Right lobe of liver (tissue), 6 donors: ENCODE measurements at regions of chr16 and their contacts with region 1.

Region 1: DNA sequence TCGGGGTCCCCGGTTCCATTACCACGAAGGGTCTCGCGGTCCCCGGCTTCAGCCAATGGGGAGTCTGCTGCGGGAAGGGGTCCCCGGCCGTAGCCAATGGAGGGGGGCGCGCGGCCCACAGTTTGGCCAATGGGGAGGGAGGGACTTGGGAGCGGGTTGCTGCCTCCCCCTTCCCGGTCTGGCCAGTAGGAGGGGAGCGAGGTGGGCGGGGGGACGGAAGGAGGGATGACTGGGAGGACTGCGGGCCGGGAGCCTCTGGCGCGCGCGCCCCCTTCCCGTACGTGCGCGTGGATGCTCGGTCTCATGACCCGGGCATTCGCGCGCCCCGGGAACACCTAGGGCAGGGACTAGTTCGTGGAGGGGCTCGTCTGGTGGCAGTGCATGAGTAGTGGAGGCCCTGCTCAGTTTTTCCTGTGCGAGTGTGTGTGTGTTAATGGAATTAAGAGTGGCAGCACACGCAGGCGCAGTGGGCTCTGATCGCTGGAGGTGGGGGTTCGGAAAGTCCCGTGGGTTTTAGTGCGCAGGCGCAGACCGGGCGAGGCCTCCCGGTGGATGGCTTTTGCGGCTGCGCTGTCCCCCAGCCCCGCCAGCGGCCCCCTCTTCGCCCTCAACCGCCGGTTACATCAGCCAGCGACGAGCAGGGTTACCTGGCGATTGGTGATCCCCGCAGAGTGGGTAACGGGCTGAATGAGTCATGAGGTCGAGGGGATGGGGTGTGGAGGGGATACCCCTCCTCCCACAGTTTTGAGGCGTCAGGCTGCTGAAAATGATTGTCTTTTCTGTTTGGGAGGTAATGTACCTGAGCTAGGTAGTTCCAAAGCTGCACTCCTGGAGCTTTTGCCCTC is 1.3 kb downstream of the ATXN2L start:
- DNase-seq: peak; percentile 98
- ATAC-seq: peak; percentile 87 to 95 (median 88)
- H3K4me3 ChIP-seq: peak overlapping the region; percentile 97 to 99 (median 99)
- H3K27ac ChIP-seq: peak overlapping the region; percentile 88 to 99 (median 94)
- H3K4me1 ChIP-seq: peaks cover 0 to 43% (median 12%) of the 10 kb centered on the region in 4 donors
- H3K27me3 ChIP-seq: no peaks in the 10 kb centered on the region
- CTCF ChIP-seq: peak in 3 of 4 donors; percentile 21 to 38 (median 32)
- POLR2A ChIP-seq: peak; percentile 81

Region 2: DNA sequence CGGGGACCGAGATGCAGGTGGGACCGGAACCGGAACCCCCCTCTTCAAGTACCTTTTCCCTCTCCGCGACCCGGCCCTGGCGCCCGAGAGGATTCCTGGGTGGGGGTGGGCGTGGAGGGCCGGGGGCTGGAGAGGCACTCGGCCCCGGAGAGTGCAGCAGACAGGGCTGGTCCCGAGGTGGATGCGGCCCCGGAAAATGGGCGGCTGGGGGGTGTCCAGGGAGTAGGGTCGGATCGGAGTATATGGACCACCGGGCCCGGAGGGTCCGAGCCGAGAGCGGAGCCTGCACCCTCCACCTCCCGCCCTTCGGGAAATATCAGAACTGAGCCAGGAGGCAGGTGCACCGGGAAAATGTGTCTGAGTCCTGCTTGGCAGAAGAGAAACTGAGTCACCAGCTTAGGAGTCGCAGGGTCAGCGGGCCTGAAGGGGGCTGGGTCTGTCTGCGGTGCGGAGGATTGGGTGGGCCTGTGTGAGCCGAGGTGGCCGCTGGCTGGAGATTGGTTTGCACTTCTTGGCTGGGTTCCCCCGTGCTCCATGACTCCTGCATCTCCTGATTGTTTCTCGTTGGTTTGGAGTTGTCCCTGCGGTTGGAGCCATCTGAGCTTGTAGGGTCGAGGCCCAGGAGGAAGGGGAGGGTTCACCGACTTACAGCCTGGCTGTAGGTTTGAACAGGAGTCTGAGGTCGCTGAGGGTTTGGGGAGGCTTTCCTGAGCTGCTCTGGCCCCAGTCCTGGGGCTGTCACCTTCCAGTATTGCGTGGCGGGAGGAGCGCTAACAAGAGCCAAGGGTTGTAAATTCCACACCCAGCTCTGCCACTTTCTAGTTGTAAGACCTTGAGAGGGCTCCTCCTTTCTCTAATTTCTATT is 40.1 kb after region 1 on chr16:
- intact Hi-C with region 1: loop called in 1 of 2 experiments (anchors 10 kb)
- DNase-seq: no peak
- ATAC-seq: peak in 2 of 4 donors; percentile 1 to 5
- H3K4me3 ChIP-seq: peak overlapping the region; percentile 76 to 98 (median 93)
- H3K27ac ChIP-seq: peak overlapping the region; percentile 60 to 89 (median 84)
- H3K4me1 ChIP-seq: peaks cover 0 to 17% (median 0%) of the 10 kb centered on the region in 4 donors
- H3K27me3 ChIP-seq: no peaks in the 10 kb centered on the region
- CTCF ChIP-seq: no peak
- POLR2A ChIP-seq: no peak

Region 3: GRCh38 chr16:28935924-28936783 is 112.1 kb after region 1 on chr16:
- intact Hi-C with region 1: loop called in 1 of 2 experiments (anchors 10 kb)
- DNase-seq: peak; percentile 83 to 92 (median 85)
- ATAC-seq: peak; percentile 95 to 99 (median 98)
- H3K4me3 ChIP-seq: peak overlapping the region in 1 of 3 donors; percentile 24
- H3K27ac ChIP-seq: no peak overlapping the region
- H3K4me1 ChIP-seq: no peaks in the 10 kb centered on the region
- H3K27me3 ChIP-seq: no peaks in the 10 kb centered on the region
- CTCF ChIP-seq: no peak
- POLR2A ChIP-seq: no peak